Kidney (tissue), 22 donors: ENCODE measurements at regions of chr6 and their contacts with region 1.

Region 1: DNA sequence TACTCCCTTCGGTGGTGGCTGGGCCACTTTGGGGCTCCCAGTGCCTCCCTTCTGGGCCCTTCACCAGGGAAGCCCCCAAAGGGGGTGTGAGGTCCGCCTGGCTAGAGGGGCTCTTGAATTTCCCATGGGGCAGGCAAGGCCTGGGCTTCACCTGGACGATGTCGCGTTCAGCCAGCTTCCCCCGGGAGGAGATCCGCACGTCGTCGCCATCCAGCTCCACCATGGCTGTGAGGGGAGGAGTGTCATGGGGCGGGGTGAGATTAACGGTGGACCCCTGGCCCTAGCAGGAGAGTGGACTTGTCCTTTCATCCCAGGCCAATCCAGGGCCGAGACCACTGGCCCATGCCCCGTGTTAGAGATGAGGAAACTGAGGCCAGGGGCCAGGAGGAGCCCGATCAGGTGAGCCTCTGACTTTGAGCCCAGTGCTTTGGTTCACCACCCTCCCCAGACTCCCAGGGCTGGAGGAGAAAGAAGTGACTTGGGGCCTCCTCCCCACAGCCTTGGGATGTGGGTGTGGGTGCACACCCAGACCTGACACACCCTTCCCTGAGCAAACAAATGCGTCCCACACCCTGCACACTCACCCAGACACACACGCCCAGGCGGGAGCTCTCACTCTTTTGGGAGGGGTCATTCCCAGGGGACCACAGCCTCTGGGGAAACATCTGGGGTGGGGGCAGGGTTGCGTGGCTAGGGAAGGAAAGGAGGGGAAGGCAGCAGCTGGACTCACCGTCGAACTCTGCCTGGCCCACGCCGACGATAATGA is 46.1 kb downstream of the RAB44 start:
- DNase-seq: no peak
- H3K4me3 ChIP-seq: no peak overlapping the region
- H3K27ac ChIP-seq: no peak overlapping the region
- H3K4me1 ChIP-seq: no peaks in the 10 kb centered on the region
- H3K27me3 ChIP-seq: no peaks in the 10 kb centered on the region
- CTCF ChIP-seq: no peak

Region 2: GRCh38 chr6:36692220-36692619 is 51.5 kb before region 1 on chr6:
- intact Hi-C with region 1: loop called (anchors 10 kb)
- DNase-seq: no peak
- H3K4me3 ChIP-seq: no peak overlapping the region
- H3K27ac ChIP-seq: no peak overlapping the region
- H3K4me1 ChIP-seq: no peaks in the 10 kb centered on the region
- H3K27me3 ChIP-seq: no peaks in the 10 kb centered on the region
- CTCF ChIP-seq: no peak